Mammary epithelial cell (primary cell): ENCODE measurements at regions of chr4 and their contacts with region 1.

Region 1: DNA sequence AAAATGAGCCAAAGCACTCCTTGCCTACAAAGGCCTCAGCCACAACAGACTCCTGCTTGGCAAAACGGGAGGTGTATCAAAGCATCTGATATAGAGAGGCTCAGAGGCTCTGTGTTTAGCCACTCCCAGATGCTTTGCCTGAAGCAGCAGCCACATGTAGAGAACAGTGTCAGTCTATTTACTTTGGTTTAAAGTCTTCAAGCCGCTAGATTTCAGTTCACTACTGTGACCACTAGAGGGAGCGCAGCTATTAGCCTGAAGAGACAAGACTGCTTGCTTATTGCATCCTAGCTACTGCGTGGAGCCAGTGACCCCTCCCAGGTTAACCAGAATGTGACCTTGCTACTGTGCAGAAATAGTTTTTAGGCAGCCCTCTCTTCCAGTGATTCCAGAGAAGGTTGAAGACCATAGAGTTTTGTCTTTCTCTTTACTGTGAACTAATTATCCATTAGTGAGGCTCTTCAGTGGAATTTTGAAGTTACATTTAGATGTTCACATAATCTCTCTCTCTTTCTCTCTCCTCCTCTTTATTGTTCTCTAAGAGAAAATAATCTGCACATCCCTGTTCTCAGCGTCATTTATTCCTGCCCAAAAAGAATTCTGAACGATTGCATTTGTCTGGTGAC is 39.3 kb downstream of the BMP3 start:
- DNase-seq: peak; percentile 73
- H3K4me3 ChIP-seq: no peak overlapping the region
- H3K27ac ChIP-seq: no peak overlapping the region
- H3K4me1 ChIP-seq: no peaks in the 10 kb centered on the region
- H3K27me3 ChIP-seq: no peaks in the 10 kb centered on the region
- CTCF ChIP-seq: peak; percentile 94 to 95

Region 2: DNA sequence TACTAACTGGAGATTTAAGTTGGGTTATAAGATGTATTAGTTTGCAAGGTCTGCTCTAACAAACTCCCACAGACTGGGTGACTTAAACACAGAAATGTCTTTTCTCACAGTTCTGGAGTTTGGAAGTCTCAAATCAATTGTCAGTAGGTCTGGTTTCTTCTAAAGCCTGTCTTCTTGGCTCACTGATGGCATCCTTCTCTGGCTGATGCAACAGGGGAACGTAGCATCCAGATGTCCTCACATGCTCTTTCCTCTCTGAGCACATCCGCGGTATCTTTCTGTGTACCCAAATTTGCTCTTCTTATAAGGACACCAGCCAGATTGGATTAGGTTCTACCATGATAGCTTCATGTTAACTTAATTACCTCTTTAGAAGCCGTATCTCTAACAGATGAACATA is 102.5 kb before region 1 on chr4:
- CTCF ChIA-PET with region 1: no interaction called
- dilution Hi-C with region 1: no loop called
- in situ Hi-C with region 1: no loop called
- intact Hi-C with region 1: no loop called
- DNase-seq: no peak
- H3K4me3 ChIP-seq: no peak overlapping the region
- H3K27ac ChIP-seq: no peak overlapping the region
- H3K4me1 ChIP-seq: no peaks in the 10 kb centered on the region
- H3K27me3 ChIP-seq: no peaks in the 10 kb centered on the region
- CTCF ChIP-seq: no peak

Region 3: DNA sequence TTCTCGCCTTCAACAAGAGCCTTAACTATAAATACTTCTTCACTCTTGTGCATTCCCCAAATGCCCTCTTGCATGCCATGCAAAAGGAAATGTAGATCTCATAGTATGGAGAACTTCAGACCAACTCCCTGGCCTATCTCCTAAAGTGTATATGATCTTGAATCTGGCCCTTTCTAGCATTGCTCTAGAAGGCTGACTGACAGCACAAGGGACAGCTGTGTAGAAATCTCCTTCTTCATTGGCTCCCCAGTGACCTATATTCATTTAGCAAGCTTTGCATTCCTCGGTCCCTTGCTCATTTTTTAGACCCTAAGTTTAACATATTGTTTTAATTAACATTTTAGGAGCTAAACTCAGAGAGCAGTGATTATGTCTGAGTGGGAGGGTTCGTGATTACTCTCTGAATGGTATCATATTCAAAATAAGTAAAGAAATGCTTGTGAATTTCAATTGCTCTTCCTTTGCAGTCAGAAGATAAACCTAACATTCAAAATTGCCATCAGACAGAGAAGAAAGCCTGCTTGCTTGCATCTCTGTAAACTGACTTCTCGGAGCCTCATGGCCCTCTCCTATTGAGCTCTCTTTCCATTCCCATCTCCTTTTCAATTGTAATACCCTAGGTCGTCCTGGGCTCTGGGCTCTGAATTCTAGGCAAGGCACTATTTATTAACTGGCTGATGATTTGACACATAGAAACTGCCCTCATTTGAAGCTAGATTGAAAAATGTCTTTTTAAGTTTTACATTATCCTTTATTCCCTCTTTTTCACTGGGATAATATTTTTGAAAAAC is 265.5 kb after region 1 on chr4:
- CTCF ChIA-PET with region 1: interaction called, 11 read pairs
- dilution Hi-C with region 1: no loop called
- in situ Hi-C with region 1: no loop called
- intact Hi-C with region 1: no loop called
- DNase-seq: no peak
- H3K4me3 ChIP-seq: no peak overlapping the region
- H3K27ac ChIP-seq: no peak overlapping the region
- H3K4me1 ChIP-seq: no peaks in the 10 kb centered on the region
- H3K27me3 ChIP-seq: no peaks in the 10 kb centered on the region
- CTCF ChIP-seq: no peak

Region 4: GRCh38 chr4:81676537-81676936 is 606.7 kb after region 1 on chr4:
- CTCF ChIA-PET with region 1: no interaction called
- dilution Hi-C with region 1: no loop called
- in situ Hi-C with region 1: no loop called
- intact Hi-C with region 1: no loop called
- DNase-seq: no peak
- H3K4me3 ChIP-seq: no peak overlapping the region
- H3K27ac ChIP-seq: no peak overlapping the region
- H3K4me1 ChIP-seq: no peaks in the 10 kb centered on the region
- H3K27me3 ChIP-seq: no peaks in the 10 kb centered on the region
- CTCF ChIP-seq: no peak